ENCODE measurements at regions of chr12 and their contacts with region 1.

Region 1: DNA sequence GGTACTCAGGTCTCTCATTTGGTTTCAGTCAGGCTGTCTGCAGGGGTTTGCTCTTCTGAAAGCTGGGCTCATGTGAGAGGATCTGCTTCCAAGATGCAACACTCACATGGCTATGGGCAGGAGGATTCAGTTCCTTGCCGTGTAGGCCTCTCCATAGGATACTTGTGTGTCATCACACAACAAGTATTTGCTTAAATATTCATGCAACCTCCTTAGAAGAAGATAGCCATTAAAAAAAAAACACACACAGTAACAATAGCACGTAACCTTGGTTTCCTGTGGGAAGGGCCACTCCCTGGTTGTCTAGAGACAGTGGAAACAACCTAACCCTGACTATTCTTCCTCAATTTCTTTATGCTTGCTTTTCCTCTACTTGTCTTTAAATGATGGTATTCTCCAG is 31.8 kb upstream of the CLEC4E start:
- DNase-seq: no peak
- H3K4me3 ChIP-seq: no peak overlapping the region
- H3K27ac ChIP-seq: no peak overlapping the region
- H3K4me1 ChIP-seq: no peaks in the 10 kb centered on the region
- H3K27me3 ChIP-seq: no peaks in the 10 kb centered on the region
- CTCF ChIP-seq: no peak
- EP300 ChIP-seq: no peak
- POLR2A ChIP-seq: no peak
- RAD21 ChIP-seq: no peak

Region 2: DNA sequence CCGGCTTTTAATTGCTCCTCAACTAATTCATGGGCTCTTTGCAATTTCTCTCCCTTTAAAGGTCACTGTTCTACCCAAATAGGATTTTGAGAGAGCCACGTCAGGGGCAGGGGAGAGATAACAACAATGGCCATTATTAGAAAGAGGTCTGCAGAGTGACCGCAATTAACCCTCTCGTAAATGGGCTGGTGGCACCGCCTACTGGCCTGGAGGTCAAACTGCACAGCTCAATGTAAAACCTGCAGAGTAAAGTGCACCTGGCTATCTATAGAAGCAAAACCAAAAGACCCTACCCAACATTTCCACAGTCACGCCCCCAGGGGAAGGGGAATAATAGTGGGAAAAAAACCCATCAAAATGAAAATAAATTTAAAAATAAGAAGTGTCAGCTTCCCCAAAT is 10.2 kb before region 1 on chr12:
- CTCF ChIA-PET with region 1: interaction called, 13 read pairs
- POLR2A ChIA-PET with region 1: interaction called, 3 read pairs
- DNase-seq: peak in 1 of 2 experiments; percentile 72
- H3K4me3 ChIP-seq: no peak overlapping the region
- H3K27ac ChIP-seq: no peak overlapping the region
- H3K4me1 ChIP-seq: peaks cover 0 to 11% (median 6%) of the 10 kb centered on the region in 4 experiments; a peak in 6 of 7 replicates
- H3K27me3 ChIP-seq: no peaks in the 10 kb centered on the region
- CTCF ChIP-seq: peak; percentile 52 to 75 (median 63); a peak in 3 of 4 replicates
- EP300 ChIP-seq: no peak
- POLR2A ChIP-seq: no peak
- RAD21 ChIP-seq: peak in 1 of 2 experiments; percentile 39; a peak in 1 of 4 replicates

Measured in H1 (cell line).